Posterior vena cava (tissue), 2 donors: ENCODE measurements at regions of chr3 and their contacts with region 1.

Region 1: DNA sequence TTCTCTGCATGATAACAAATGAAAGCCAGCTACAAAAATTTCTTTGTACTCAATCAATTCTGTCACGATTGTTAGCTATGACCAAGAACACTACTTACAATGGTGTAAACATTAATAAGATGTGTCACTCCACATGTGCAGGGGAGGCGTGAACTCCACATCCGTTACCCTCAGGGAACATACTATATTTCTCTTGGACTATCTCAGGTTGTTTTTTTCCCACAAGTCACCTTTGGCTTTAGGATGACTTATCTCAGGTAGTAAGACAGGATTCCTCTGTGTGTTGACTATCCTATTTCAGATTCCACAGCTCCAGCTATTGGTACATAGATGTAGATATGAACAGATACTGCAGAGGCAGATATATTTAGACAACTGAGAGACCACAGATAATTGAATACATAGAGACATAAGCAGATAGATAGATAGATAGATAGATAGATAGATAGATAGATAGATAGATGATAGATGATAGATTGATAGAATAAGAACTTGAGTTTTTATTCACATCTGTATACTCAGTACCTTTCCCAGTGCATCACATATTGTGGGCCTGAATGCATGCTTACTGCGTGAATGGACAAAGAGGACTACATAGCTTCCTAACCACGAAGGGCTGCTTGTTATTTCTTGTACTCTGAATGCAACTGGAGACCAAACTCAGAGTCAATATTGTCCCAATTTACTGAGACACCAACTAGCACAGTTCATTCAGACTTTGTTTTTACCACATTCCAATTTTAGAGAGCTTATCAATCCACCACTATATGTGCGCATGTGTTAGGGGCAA is 423.1 kb upstream of the GRM7 start:
- DNase-seq: no peak

Region 2: DNA sequence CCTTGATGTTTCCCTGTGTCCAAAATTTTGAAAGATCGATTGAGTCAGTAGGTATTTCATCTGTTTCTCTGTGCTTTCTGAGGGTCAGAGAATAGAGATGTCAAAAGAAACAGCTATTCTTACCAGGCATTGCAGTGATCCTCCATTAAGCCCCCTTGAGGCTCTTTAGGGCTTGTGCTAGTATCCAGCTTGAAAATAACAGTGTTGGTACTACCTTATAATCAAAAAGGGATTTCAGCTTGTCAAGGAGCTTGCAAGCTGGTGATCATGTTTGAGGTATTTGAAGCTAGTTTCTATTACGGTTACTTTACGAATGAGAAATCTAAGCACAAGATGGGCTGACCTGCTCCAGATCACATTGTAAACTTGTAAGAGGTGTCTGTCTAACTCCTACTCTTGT is 1146.9 kb before region 1 on chr3:
- intact Hi-C with region 1: no loop called
- DNase-seq: no peak

Region 3: DNA sequence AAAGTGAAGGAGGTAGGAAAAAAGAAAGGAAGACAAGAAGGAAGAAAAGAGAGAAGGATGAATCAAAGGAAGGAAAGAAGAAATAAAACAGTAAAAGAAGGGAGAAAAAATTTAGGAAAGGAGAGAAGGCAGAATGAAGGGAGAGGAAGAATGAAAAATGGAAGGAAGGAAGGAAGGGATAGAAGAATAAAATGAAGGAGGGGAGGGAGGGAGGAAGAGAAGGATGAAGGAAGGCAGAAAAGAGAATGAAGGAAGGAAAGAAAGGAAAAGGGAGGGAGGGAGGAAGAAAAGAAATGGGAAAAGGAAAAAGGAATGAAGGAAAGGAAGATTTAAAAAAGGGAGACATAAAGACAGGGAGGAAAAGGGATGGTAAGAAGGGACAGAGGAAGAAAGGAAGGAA is 29.4 kb after region 1 on chr3:
- intact Hi-C with region 1: loop called in 1 of 2 experiments (anchors 1 kb)
- DNase-seq: no peak